CD4-positive, alpha-beta memory T cell (primary cell): ENCODE measurements at regions of chr13 and their contacts with region 1.

Region 1: DNA sequence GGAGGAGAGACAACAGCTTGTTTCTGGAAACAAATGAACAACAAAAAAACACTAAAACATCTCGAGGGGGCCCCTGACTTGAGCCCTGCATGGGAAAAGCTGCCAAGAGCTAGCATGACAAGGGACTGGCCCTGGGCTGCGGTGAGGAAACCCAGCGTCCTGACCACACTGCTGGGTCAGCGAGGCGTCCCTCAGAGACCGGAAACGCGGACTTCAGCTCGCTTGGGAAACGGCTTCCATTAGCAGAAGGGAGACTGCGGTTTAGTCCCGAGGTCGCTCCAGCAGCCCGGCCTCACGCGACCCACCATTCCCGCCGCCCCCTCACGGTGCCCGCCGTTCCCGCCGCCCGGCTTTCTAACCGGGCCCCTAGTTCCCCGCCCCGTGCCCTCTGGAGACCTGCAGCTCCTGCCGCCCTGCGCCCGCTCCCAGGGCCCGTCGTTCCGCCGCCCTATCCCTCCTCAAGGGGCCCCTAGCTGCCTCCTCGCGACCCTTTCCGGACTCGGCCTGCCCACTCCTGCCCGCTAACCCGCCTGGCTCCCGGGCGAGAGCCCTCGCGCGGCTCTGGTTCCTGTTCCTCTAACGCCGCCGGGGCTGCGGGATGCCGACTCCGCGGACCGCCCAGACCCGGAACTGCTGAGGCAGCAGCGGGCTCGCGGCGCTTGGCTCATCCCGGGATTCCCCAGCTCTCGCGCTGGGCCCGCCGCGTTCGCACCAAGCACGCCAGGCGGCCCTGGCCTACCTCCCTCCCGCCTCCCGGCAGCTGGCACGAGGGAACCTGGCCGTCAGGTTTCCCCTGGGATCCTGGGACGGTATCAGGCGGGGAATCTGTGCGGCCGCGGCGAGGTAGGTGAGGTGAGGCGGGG is at the start of gene CCDC122:
- DNase-seq: peak; percentile 72 to 85 (median 80)
- H3K4me3 ChIP-seq: peak within 1 kb of the TSS; percentile 20 to 61
- H3K4me3 Mint-ChIP-seq: peak within 1 kb of the TSS; percentile 89 to 98 (median 93)
- H3K27ac ChIP-seq: peak within 1 kb of the TSS; percentile 72
- H3K27ac Mint-ChIP-seq: peak within 1 kb of the TSS; percentile 86 to 97 (median 93)
- H3K4me1 ChIP-seq: peaks cover 12% of the 10 kb centered on the region
- H3K4me1 Mint-ChIP-seq: peaks cover 19 to 32% (median 26%) of the 10 kb centered on the region in 4 donors
- H3K27me3 ChIP-seq: no peaks in the 10 kb centered on the region
- H3K27me3 Mint-ChIP-seq: peaks cover 0 to 1% of the 10 kb centered on the region in 2 donors
- total RNA-seq, gene CCDC122: 4.0 to 4.7 TPM

Region 2: GRCh38 chr13:42594970-42595571 is 1284.1 kb before region 1 on chr13:
- CTCF ChIA-PET with region 1: no interaction called
- POLR2A ChIA-PET with region 1: no interaction called
- intact Hi-C with region 1: loop called (anchors 1 kb)
- DNase-seq: peak; percentile 23 to 43 (median 38)
- H3K4me3 ChIP-seq: no peak overlapping the region
- H3K4me3 Mint-ChIP-seq: no peak overlapping the region
- H3K27ac ChIP-seq: no peak overlapping the region
- H3K27ac Mint-ChIP-seq: peak overlapping the region in 1 of 7 donors; percentile 39
- H3K4me1 ChIP-seq: no peaks in the 10 kb centered on the region
- H3K4me1 Mint-ChIP-seq: peaks cover 0 to 2% (median under 1%) of the 10 kb centered on the region in 4 donors
- H3K27me3 ChIP-seq: no peaks in the 10 kb centered on the region
- H3K27me3 Mint-ChIP-seq: peaks cover 0 to 2% of the 10 kb centered on the region in 2 donors

Region 3: DNA sequence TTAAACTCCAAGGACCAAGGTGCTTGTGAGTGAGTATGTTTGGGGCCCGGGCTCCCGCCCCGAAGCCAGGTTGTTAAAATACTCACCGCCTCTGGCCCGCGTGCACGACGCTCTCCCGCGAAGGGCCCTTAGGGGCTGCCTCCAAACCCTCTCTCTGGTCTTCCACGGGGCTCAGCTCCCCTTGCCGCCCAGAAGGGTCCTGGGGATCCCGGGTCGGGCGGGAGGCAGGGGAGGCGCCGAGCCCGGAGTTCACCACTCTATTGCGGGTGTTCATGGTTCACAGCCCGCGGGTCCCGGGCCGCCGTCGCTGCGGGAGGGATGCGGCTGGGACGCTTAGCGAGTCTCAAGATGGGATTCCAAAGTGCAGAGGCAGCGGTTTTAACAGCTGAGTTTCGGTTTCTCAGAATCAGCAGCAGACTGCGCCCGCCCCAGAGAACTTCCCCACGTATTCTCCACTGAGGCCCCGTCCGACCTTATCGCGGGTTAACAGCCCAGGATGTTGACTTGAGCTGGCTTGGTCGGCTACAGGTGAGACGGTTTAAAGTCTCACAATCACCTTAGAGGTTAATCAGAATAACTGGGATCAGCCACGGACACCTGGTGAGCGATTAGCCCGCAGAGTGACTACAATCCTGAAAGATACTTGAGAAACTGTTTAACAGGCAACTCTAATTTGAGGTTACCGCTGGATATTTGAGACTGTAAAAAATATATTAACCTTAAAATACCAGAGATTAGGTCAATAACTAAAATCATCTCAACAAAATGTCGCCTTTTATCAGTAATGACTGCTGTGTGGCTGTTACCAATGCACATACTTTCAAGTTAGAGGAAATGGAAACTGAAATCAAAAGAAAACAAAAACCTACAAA is 887.0 kb before region 1 on chr13 and contains the start of gene EPSTI1:
- CTCF ChIA-PET with region 1: no interaction called
- POLR2A ChIA-PET with region 1: interaction called, 12 read pairs
- intact Hi-C with region 1: no loop called
- DNase-seq: peak; percentile 79 to 84 (median 81)
- H3K4me3 ChIP-seq: peak within 1 kb of the TSS; percentile 73 to 88
- H3K4me3 Mint-ChIP-seq: peak within 1 kb of the TSS; percentile 93 to 97 (median 96)
- H3K27ac ChIP-seq: peak within 1 kb of the TSS; percentile 95
- H3K27ac Mint-ChIP-seq: peak within 1 kb of the TSS; percentile 99 to 100 (median 99)
- H3K4me1 ChIP-seq: peaks cover 40% of the 10 kb centered on the region
- H3K4me1 Mint-ChIP-seq: peaks cover 35 to 63% (median 41%) of the 10 kb centered on the region in 4 donors
- H3K27me3 ChIP-seq: no peaks in the 10 kb centered on the region
- H3K27me3 Mint-ChIP-seq: no peaks in the 10 kb centered on the region
- total RNA-seq, gene EPSTI1: 17.1 to 19.4 TPM

Region 4: DNA sequence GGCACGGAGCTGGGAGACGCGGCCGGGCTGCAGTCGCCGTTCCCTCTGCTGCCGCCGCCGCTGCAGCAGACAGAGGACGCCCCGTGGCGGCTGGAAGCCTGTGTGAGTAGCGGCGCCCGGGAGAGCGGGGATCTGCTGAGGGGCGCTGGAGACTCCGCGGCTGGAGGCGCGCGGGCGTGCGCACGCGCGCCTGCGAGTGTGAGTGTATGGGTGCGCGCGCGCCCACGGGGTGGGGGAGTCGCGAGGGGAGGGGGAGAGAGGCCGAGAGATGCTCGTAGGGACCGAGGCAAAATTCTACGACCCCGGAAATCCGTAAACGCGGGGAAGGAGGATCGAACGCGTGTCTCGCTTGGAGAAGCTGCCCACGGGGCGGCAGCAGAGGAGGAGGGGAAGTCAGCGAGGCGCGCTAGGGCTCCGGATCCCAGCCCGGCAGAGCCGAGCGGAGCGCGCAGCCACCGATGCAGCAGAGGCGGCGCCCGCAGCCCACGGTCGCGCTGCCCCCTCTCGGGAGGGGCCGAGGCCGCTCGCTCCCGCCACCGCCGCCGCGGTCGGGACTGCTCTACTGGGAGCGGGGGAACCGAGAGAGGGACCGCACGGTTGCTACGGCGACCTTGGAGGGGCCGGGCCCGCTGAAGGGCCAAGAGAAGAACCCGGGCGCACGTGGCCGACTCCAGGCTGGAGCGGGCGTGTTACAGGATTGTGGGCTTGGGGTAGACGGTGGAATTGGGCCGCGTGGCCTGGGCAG is 92.2 kb before region 1 on chr13 and contains the start of gene ENOX1:
- CTCF ChIA-PET with region 1: no interaction called
- POLR2A ChIA-PET with region 1: no interaction called
- intact Hi-C with region 1: loop called (anchors 5 kb)
- DNase-seq: peak in 3 of 5 donors; percentile 13 to 47 (median 16)
- H3K4me3 ChIP-seq: peak within 1 kb of the TSS in 1 of 2 donors; percentile 31
- H3K4me3 Mint-ChIP-seq: peak within 1 kb of the TSS; percentile 76 to 89 (median 80)
- H3K27ac ChIP-seq: no peak within 1 kb of the TSS
- H3K27ac Mint-ChIP-seq: peak within 1 kb of the TSS in 1 of 7 donors; percentile 74
- H3K4me1 ChIP-seq: peaks cover 6% of the 10 kb centered on the region
- H3K4me1 Mint-ChIP-seq: peaks cover 6 to 16% (median 13%) of the 10 kb centered on the region in 4 donors
- H3K27me3 ChIP-seq: peaks cover 4% of the 10 kb centered on the region
- H3K27me3 Mint-ChIP-seq: peaks cover 28 to 30% of the 10 kb centered on the region in 2 donors
- total RNA-seq, gene ENOX1: not detected

Region 5: GRCh38 chr13:44274452-44275205 is 395.5 kb after region 1 on chr13:
- CTCF ChIA-PET with region 1: no interaction called
- POLR2A ChIA-PET with region 1: interaction called, 3 read pairs
- intact Hi-C with region 1: loop called (anchors 1 kb)
- DNase-seq: peak; percentile 73 to 83 (median 78)
- H3K4me3 ChIP-seq: peak overlapping the region; percentile 48
- H3K4me3 Mint-ChIP-seq: peak overlapping the region; percentile 61 to 89 (median 77)
- H3K27ac ChIP-seq: peak overlapping the region; percentile 45
- H3K27ac Mint-ChIP-seq: peak overlapping the region; percentile 80 to 98 (median 94)
- H3K4me1 ChIP-seq: peaks cover 24% of the 10 kb centered on the region
- H3K4me1 Mint-ChIP-seq: peaks cover 24 to 40% (median 27%) of the 10 kb centered on the region in 4 donors
- H3K27me3 ChIP-seq: no peaks in the 10 kb centered on the region
- H3K27me3 Mint-ChIP-seq: peaks cover 5 to 6% of the 10 kb centered on the region in 2 donors

Region 6: GRCh38 chr13:44577236-44578066 is 698.3 kb after region 1 on chr13:
- CTCF ChIA-PET with region 1: no interaction called
- POLR2A ChIA-PET with region 1: interaction called, 3 read pairs
- intact Hi-C with region 1: loop called (anchors 2 kb)
- DNase-seq: peak; percentile 93 to 96 (median 94)
- H3K4me3 ChIP-seq: peak overlapping the region; percentile 47 to 86
- H3K4me3 Mint-ChIP-seq: peak overlapping the region; percentile 88 to 97 (median 94)
- H3K27ac ChIP-seq: peak overlapping the region; percentile 84
- H3K27ac Mint-ChIP-seq: peak overlapping the region; percentile 91 to 97 (median 95)
- H3K4me1 ChIP-seq: peaks cover 39% of the 10 kb centered on the region
- H3K4me1 Mint-ChIP-seq: peaks cover 28 to 46% (median 38%) of the 10 kb centered on the region in 4 donors
- H3K27me3 ChIP-seq: no peaks in the 10 kb centered on the region
- H3K27me3 Mint-ChIP-seq: no peaks in the 10 kb centered on the region